ENCODE measurements at regions of chr20 and their contacts with region 1.

Region 1: GRCh38 chr20:25254986-25255680 is 7.2 kb downstream of the PYGB start:
- DNase-seq: no peak
- ATAC-seq: no peak; the same call in 1 of the 2 replicates
- H3K4me3 ChIP-seq: no peak overlapping the region
- H3K27ac ChIP-seq: no peak overlapping the region
- H3K4me1 ChIP-seq: peaks cover 10% of the 10 kb centered on the region
- H3K27me3 ChIP-seq: no peaks in the 10 kb centered on the region
- CTCF ChIP-seq: no peak
- POLR2A ChIP-seq: no peak
- RAD21 ChIP-seq: no peak

Region 2: DNA sequence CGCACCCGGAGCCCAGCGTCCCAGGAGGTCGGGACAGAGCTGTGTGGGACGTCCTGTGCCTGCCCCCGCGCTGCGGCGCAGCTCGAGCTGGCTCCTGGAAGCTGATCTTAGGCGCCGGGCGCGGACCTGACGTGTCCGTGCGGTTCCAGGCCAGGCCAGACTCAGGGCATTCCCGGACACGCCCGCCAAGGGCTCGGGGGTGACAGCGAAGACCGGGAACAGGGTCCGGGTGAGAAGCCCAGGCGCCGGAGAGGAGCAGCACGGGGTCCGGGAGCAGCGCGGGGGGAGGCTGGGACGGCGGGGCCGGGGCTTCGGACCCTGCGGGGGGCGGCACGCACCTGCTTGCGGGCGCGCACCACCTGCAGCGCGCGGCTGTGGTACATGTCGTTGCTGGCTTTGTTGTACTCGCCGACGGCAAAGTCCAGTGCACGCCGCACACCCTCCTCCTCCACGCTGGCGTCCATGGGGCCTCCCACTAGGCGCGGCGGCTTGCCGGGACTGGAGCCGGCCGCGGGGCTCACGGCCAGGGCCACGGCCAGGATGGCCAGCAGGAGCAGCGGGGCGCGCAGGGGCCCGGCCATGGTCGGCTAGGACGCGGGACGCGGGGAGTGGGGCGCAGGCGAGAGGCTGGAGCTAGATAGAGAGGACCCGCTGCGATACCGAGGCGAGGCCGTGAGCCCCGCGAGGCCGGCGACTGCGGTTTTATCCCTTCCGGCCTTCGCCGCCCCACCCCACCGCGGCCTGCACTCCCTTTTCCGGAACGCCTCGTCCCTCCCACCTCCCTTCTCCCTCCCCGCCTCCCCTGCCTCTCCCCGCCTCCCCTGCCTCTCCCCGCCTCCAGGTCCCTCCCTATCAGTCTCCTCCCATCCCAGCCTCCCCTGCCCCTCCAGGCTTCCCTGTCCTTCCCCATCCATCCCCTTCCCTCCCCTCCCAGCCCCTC is 1617.6 kb before region 1 on chr20 and contains the start of gene CST3:
- CTCF ChIA-PET with region 1: no interaction called
- POLR2A ChIA-PET with region 1: no interaction called
- dilution Hi-C with region 1: no loop called
- in situ Hi-C with region 1: loop called (anchors 25 kb)
- intact Hi-C with region 1: no loop called
- DNase-seq: peak; percentile 81
- ATAC-seq: peak; percentile 89
- H3K4me3 ChIP-seq: peak within 1 kb of the TSS; percentile 96
- H3K27ac ChIP-seq: peak within 1 kb of the TSS; percentile 98
- H3K4me1 ChIP-seq: peaks cover 11% of the 10 kb centered on the region
- H3K27me3 ChIP-seq: no peaks in the 10 kb centered on the region
- CTCF ChIP-seq: no peak
- POLR2A ChIP-seq: peak; percentile 92
- RAD21 ChIP-seq: no peak
- total RNA-seq, gene CST3: 26.0 and 30.8 TPM in 2 replicates

Region 3: DNA sequence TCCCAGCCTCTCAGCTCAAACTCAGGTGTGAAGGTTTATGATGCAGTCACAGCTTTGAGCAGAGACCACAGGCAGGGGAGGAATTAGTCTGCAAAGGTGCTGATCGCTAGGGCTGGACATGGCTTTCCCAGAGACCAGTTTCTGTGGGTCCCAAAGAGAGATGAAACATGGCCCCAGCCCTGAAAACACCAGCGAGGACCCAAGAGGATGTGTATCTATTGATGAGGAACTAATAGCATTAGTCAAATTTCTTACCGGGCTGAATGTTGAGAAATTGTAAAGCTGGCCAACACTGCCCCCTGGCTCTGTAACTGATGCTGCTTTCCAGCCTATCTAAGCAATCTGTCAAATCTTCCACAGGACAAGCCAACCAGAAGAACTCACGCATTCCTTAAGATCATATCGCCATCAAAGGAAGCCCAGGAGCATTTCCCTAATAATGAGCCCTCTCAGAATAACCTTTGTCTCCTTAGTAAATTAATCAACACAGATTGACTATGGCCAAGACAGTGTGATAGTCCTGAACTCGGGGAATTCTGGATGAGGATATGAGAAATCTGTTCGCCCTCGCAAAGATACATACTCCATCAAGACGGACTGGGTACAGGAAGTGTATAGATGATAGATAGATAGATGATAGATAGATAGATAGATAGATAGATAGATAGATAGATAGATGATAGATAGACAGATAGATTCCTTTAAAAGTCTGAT is 189.4 kb before region 1 on chr20:
- CTCF ChIA-PET with region 1: no interaction called
- POLR2A ChIA-PET with region 1: no interaction called
- dilution Hi-C with region 1: no loop called
- in situ Hi-C with region 1: loop called (anchors 10 kb)
- intact Hi-C with region 1: no loop called
- DNase-seq: peak; percentile 52
- ATAC-seq: peak; percentile 70
- H3K4me3 ChIP-seq: no peak overlapping the region
- H3K27ac ChIP-seq: no peak overlapping the region
- H3K4me1 ChIP-seq: no peaks in the 10 kb centered on the region
- H3K27me3 ChIP-seq: peaks cover 60% of the 10 kb centered on the region
- CTCF ChIP-seq: peak; percentile 72
- POLR2A ChIP-seq: no peak
- RAD21 ChIP-seq: peak; percentile 77

Region 4: GRCh38 chr20:25237610-25238318 is 17.4 kb before region 1 on chr20:
- CTCF ChIA-PET with region 1: no interaction called
- POLR2A ChIA-PET with region 1: no interaction called
- dilution Hi-C with region 1: no loop called
- in situ Hi-C with region 1: no loop called
- intact Hi-C with region 1: no loop called
- DNase-seq: peak; percentile 100
- ATAC-seq: peak; percentile 93
- H3K4me3 ChIP-seq: no peak overlapping the region
- H3K27ac ChIP-seq: peak overlapping the region; percentile 91
- H3K4me1 ChIP-seq: peaks cover 21% of the 10 kb centered on the region
- H3K27me3 ChIP-seq: no peaks in the 10 kb centered on the region
- CTCF ChIP-seq: no peak
- POLR2A ChIP-seq: peak; percentile 75
- RAD21 ChIP-seq: peak; percentile 28

Region 5: DNA sequence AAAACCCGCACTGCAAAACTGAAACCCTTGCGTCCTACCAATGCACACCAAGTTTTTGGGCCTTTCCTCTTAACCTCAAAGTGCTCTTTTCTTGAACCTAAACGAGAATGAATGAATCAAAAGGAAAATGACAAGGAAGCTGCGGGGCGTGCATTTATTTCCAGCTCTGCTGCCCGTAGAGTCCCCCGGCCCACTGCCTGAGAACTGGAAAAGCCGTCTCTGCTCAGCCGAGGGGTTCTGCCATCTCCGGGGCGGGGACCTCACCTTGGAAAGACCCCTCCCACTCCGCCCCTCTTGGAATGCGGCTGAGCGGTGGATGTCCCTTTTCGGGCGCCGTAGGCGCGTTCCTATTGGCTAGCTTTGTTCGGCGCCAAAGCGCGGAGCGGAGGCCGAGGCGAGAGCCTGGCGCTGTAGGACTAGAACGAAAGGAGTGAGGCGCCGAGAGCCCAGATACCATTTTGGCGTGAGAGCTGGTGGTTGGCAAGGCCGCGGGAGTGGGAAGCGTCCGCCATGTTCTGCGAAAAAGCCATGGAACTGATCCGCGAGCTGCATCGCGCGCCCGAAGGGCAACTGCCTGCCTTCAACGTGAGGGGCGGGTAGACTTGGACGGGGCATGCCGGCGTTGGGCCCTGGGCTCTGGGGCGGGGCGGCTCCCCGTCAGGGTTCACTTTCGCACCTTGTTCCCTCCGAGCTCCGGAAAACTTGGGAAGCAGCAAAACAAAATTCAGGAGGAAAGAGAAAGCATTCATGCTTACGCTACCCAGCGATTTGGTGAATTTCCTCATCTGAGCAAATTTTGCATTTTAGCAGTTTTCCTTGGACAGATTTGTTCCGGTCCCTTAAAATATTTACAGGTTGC is 152.4 kb after region 1 on chr20 and contains the start of gene GINS1:
- CTCF ChIA-PET with region 1: no interaction called
- POLR2A ChIA-PET with region 1: no interaction called
- dilution Hi-C with region 1: no loop called
- in situ Hi-C with region 1: no loop called
- intact Hi-C with region 1: no loop called
- DNase-seq: peak; percentile 85
- ATAC-seq: peak; percentile 99
- H3K4me3 ChIP-seq: peak within 1 kb of the TSS; percentile 94
- H3K27ac ChIP-seq: peak within 1 kb of the TSS; percentile 72
- H3K4me1 ChIP-seq: peaks cover 1% of the 10 kb centered on the region
- H3K27me3 ChIP-seq: no peaks in the 10 kb centered on the region
- CTCF ChIP-seq: no peak
- POLR2A ChIP-seq: peak; percentile 71
- RAD21 ChIP-seq: no peak
- total RNA-seq, gene GINS1: 6.6 and 12.2 TPM in 2 replicates